ENCODE measurements at regions of chr19 and their contacts with region 1.

Region 1: GRCh38 chr19:34082289-34083077 is 89.8 kb upstream of the LSM14A start:
- DNase-seq: no peak
- ATAC-seq: no peak
- H3K4me3 Mint-ChIP-seq: no peak overlapping the region
- H3K27ac Mint-ChIP-seq: no peak overlapping the region
- H3K4me1 Mint-ChIP-seq: no peaks in the 10 kb centered on the region
- H3K27me3 Mint-ChIP-seq: peaks cover 12% of the 10 kb centered on the region
- CTCF ChIP-seq: no peak

Region 2: GRCh38 chr19:34096020-34096915 is 13.8 kb after region 1 on chr19:
- CTCF ChIA-PET with region 1: interaction called, 16 read pairs
- POLR2A ChIA-PET with region 1: no interaction called
- intact Hi-C with region 1: no loop called
- DNase-seq: no peak
- ATAC-seq: no peak
- H3K4me3 Mint-ChIP-seq: no peak overlapping the region
- H3K27ac Mint-ChIP-seq: no peak overlapping the region
- H3K4me1 Mint-ChIP-seq: no peaks in the 10 kb centered on the region
- H3K27me3 Mint-ChIP-seq: peaks cover 11% of the 10 kb centered on the region
- CTCF ChIP-seq: peak; percentile 57

Measured in activated CD8-positive, alpha-beta T cell treated with anti-CD3 and anti-CD28 coated beads for 36 hours (primary cell).